CD8-positive, alpha-beta memory T cell (primary cell): ENCODE measurements at regions of chr17 and their contacts with region 1.

Region 1: DNA sequence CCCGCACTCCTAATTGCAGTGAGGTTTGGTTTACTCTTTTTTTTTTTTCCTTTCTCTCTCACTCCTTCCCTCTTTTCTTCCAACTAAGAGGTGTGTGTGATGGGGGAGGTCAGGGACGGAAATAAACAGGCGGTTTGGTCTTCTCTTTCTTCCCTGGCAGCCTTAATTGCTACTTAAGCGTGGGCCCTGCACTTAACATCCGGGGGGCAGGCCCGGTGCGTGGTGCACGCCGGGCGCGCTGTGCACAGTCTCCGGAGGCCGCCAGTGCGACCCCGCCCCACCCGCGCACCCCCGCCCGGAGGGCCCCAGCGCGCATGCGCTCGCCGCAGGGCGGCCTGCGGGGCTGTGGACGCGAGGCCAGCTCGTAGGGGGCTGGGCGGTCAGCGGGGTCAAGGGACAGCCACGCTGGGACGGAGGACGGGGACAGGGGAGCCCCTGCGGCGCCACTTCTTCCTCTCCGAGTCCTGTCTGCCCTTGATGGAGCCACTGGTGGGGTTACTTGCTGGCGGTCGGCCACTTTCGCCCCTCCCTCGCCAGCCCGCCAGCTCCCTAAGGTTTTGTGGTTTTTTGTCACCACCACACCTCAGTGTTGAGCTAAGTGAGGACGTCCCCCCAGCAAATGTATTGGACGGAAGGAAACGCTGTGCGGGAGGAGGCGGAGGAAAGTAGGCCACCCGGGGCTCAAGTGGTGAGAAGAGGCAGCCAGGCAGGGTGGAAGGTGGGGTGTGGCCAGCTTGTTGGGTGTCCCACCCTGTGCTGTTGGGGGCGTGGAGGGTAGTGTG is 120.9 kb downstream of the MRM1 start:
- DNase-seq: peak; percentile 58 to 85 (median 78)
- H3K4me3 ChIP-seq: peak overlapping the region; percentile 73
- H3K4me3 Mint-ChIP-seq: peak overlapping the region; percentile 78 to 86 (median 84)
- H3K27ac ChIP-seq: peak overlapping the region; percentile 52
- H3K27ac Mint-ChIP-seq: peak overlapping the region; percentile 84 to 97 (median 95)
- H3K4me1 ChIP-seq: peaks cover 54% of the 10 kb centered on the region
- H3K4me1 Mint-ChIP-seq: peaks cover 50 to 65% (median 61%) of the 10 kb centered on the region in 3 donors
- H3K27me3 ChIP-seq: no peaks in the 10 kb centered on the region
- H3K27me3 Mint-ChIP-seq: peaks cover 0 to 9% of the 10 kb centered on the region in 2 donors

Region 2: DNA sequence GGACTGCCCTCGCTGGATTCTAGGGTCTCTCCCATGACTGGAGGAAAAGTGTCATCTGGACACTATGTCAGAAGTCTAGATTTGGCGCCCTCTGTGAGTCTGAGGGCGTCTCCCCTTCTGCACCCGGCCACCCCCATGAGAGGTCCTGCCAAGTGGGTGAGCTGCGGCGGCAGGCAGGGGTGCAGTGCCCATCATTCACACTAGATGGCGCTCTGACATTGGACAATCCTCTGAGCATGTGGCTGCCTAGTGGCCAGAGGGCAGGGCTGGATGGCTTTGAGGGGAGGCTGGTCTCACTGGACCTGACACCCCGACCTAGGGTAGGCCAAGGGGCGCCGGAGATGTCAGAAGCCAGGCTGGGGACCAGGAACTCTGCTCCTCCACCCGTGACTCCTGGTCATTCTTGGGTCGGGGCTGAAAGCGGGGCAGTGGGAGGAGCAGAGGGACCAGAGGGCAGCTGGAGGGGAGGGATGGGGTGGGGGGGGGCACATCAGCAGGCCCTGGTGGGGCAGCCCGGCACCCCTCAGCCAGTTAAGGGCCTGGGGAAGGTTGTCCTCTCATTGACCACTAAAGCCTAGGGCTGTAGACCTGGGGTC is 93.0 kb before region 1 on chr17:
- CTCF ChIA-PET with region 1: no interaction called
- POLR2A ChIA-PET with region 1: no interaction called
- DNase-seq: peak; percentile 63 to 82 (median 70)
- H3K4me3 ChIP-seq: no peak overlapping the region
- H3K4me3 Mint-ChIP-seq: no peak overlapping the region
- H3K27ac ChIP-seq: no peak overlapping the region
- H3K27ac Mint-ChIP-seq: peak overlapping the region in 1 of 8 donors; percentile 30
- H3K4me1 ChIP-seq: no peaks in the 10 kb centered on the region
- H3K4me1 Mint-ChIP-seq: peaks cover 0 to 1% (median 0%) of the 10 kb centered on the region in 3 donors
- H3K27me3 ChIP-seq: no peaks in the 10 kb centered on the region
- H3K27me3 Mint-ChIP-seq: peaks cover 17 to 22% of the 10 kb centered on the region in 2 donors

Region 3: DNA sequence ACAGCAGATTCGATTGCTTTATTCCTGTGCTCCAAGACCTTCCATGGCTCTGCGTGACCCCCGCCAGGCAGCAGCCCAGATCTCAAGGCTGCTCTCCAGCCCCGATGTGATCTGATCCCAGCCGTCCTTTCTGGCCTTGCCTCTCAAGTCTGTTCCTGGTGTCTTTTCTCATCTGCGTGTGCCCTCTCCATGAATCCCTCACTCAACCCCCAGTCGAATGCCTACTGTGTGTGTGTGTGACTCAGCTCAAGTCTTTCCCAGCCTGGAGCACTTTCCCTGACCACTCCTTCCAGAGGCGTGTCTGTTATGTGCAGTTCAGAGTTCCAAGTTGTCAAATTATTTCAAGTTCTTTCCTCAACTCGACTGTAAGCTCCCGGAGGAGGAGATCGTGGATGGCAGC is 56.9 kb before region 1 on chr17:
- CTCF ChIA-PET with region 1: no interaction called
- POLR2A ChIA-PET with region 1: no interaction called
- DNase-seq: no peak
- H3K4me3 ChIP-seq: no peak overlapping the region
- H3K4me3 Mint-ChIP-seq: no peak overlapping the region
- H3K27ac ChIP-seq: no peak overlapping the region
- H3K27ac Mint-ChIP-seq: no peak overlapping the region
- H3K4me1 ChIP-seq: no peaks in the 10 kb centered on the region
- H3K4me1 Mint-ChIP-seq: no peaks in the 10 kb centered on the region
- H3K27me3 ChIP-seq: no peaks in the 10 kb centered on the region
- H3K27me3 Mint-ChIP-seq: peaks cover 10 to 19% of the 10 kb centered on the region in 2 donors

Region 4: DNA sequence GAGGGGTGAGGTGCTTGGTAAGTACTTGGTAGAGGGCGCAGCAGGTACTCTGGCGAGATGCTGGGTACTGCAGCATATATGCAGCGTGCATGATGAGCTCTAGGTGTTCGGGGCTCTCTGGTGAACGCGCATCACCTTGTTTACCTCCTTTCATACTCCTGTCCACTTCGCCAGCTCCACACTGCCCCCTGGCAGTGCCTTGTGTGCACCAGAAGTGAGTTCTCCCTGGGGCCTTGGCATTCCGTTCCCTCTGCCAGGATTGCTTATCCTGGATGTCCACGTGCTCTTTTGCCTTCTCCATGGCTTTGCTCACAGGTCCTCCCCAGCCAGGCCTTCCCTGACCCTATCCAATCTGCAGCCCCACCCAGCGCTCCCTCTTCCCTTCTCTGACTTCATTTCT is 33.3 kb after region 1 on chr17:
- CTCF ChIA-PET with region 1: interaction called, 13 read pairs
- POLR2A ChIA-PET with region 1: no interaction called
- DNase-seq: peak in 4 of 5 donors; percentile 7 to 62 (median 20)
- H3K4me3 ChIP-seq: no peak overlapping the region
- H3K4me3 Mint-ChIP-seq: no peak overlapping the region
- H3K27ac ChIP-seq: no peak overlapping the region
- H3K27ac Mint-ChIP-seq: peak overlapping the region in 1 of 8 donors; percentile 5
- H3K4me1 ChIP-seq: no peaks in the 10 kb centered on the region
- H3K4me1 Mint-ChIP-seq: no peaks in the 10 kb centered on the region
- H3K27me3 ChIP-seq: no peaks in the 10 kb centered on the region
- H3K27me3 Mint-ChIP-seq: peaks cover 13 to 21% of the 10 kb centered on the region in 2 donors

Region 5: DNA sequence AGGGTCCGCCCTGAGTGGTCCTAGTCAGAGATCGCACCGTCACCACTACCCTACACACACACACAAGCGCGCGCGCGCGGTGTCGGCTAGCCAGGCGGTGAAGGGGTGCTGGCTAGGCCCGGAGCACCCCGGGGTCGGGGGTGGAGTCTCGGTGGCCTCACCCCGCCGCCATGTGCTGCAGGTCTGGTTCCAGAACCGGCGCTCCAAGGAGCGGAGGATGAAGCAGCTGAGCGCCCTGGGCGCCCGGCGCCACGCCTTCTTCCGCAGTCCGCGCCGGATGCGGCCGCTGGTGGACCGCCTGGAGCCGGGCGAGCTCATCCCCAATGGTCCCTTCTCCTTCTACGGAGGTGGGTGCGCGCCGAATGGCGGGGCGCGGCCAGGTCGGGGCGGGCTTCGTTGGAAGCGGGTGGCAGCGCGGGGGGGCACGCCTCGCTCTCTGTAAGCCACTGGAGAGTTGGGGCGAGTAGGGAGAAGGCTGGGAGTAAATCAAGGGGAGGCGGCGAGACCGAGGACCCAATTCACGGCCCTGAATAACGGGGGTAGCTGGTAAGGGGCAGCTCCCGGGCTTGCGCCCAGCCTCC is 219.8 kb after region 1 on chr17:
- CTCF ChIA-PET with region 1: no interaction called
- POLR2A ChIA-PET with region 1: no interaction called
- DNase-seq: no peak
- H3K4me3 ChIP-seq: no peak overlapping the region
- H3K4me3 Mint-ChIP-seq: peak overlapping the region in 5 of 7 donors; percentile 33 to 71 (median 61)
- H3K27ac ChIP-seq: no peak overlapping the region
- H3K27ac Mint-ChIP-seq: peak overlapping the region in 2 of 8 donors; percentile 44 to 87
- H3K4me1 ChIP-seq: peaks cover 38% of the 10 kb centered on the region
- H3K4me1 Mint-ChIP-seq: peaks cover 34 to 49% (median 40%) of the 10 kb centered on the region in 3 donors
- H3K27me3 ChIP-seq: peaks cover 97% of the 10 kb centered on the region
- H3K27me3 Mint-ChIP-seq: peaks cover 80 to 86% of the 10 kb centered on the region in 2 donors